ENCODE measurements at regions of chr11 and their contacts with region 1.

Region 1: DNA sequence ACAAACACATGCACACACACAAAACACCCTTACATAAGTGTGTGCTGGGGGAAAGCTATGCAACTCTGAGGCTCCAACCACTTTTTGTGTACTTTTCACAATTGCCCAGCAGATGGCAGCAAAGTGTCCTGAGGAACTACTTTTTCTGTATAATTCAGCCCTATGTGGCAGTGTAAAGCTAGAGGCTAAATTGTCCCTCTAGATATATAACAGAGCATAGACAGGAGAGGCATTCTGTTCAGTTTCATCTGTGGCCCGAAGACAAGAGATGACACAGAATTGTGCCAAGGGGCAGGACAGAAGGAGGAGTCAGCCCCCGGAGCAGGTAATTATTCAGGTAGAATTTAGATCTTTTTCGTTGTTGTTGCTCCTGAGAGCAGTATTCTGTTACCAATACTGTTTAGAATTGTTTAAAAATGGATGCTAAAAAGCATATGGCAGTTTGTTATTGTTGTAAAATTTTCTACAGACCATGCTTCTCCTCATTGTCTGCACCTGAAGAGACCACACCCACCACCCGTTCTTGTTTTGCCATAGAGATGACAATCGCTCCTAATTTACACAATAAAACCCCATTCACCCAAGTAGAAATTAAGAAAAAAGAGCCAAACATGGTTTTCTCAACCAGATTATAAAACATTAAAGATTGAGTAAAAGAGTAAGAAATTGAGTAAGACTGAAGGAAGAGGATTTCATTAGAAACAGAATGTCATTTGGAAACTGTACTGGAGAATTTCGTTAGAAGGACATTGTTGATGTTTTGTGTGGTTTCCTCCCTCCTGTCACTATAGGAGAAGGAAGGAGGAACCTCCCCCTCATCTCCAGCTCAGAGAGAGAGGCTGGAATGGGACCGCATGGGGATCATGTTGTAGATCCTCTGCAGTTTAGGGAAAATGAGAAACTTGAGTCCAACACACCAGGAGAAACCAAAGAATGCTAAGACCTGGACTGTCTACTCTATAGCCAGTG is 14.5 kb upstream of the MS4A7 start:
- DNase-seq: peak; percentile 88
- ATAC-seq: peak; percentile 92
- H3K4me3 ChIP-seq: peak overlapping the region; percentile 52; the same call in 1 of the 2 replicates
- H3K27ac ChIP-seq: peak overlapping the region; percentile 36
- H3K4me1 ChIP-seq: peaks cover 14% of the 10 kb centered on the region; the same call in 1 of the 2 replicates
- H3K27me3 ChIP-seq: no peaks in the 10 kb centered on the region
- CTCF ChIP-seq: peak; percentile 63 to 92 (median 78); a peak in 5 of 6 replicates
- EP300 ChIP-seq: no peak
- POLR2A ChIP-seq: no peak
- RAD21 ChIP-seq: peak; percentile 95

Region 2: DNA sequence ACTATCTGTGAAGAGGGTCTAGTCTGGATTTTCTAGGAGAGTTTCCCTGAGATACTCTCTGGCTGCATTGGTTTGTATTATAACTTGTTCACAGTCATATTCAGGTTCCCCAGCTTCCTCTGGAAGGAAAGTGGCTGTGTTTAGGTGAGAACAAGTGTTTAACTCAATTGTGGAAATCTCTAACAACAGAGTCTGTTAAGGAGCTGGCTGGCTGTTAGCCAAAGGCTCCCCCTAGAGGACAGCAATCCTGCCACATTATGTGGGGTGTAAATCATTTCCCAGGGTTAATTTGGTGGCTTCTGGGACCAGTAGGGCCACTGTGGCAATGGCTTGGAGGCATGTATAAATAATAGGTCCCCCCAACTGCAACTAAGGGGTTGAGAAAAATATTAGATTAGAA is 18.3 kb before region 1 on chr11:
- CTCF ChIA-PET with region 1: interaction called, 119 read pairs
- POLR2A ChIA-PET with region 1: no interaction called
- RAD21 ChIA-PET with region 1: interaction called, 20 read pairs
- SMC1A ChIA-PET with region 1: interaction called, 41 read pairs
- in situ Hi-C with region 1: no loop called
- intact Hi-C with region 1: no loop called
- DNase-seq: no peak
- ATAC-seq: peak; percentile 87
- H3K4me3 ChIP-seq: no peak overlapping the region
- H3K27ac ChIP-seq: no peak overlapping the region
- H3K4me1 ChIP-seq: peaks cover 11% of the 10 kb centered on the region
- H3K27me3 ChIP-seq: no peaks in the 10 kb centered on the region
- CTCF ChIP-seq: peak; percentile 63 to 68 (median 66)
- EP300 ChIP-seq: no peak
- POLR2A ChIP-seq: no peak
- RAD21 ChIP-seq: peak; percentile 64

Region 3: GRCh38 chr11:60455531-60456042 is 91.8 kb after region 1 on chr11 and contains the start of gene MS4A1:
- CTCF ChIA-PET with region 1: interaction called, 190 read pairs
- POLR2A ChIA-PET with region 1: interaction called, 23 read pairs
- RAD21 ChIA-PET with region 1: interaction called, 195 read pairs
- SMC1A ChIA-PET with region 1: interaction called, 298 read pairs
- in situ Hi-C with region 1: loop called (anchors 10 kb)
- intact Hi-C with region 1: loop called (anchors 1 kb)
- DNase-seq: peak; percentile 98
- ATAC-seq: peak; percentile 82
- H3K4me3 ChIP-seq: peak within 1 kb of the TSS; percentile 89
- H3K27ac ChIP-seq: peak within 1 kb of the TSS; percentile 93
- H3K4me1 ChIP-seq: peaks cover 21% of the 10 kb centered on the region
- H3K27me3 ChIP-seq: no peaks in the 10 kb centered on the region
- CTCF ChIP-seq: no peak
- EP300 ChIP-seq: peak; percentile 98 to 99
- POLR2A ChIP-seq: peak; percentile 90
- RAD21 ChIP-seq: 0 out of 2 replicates have a peak, but pooled peaks have one; percentile 14
- polyA plus RNA-seq, gene MS4A1: 730 to 1,013 TPM

Region 4: GRCh38 chr11:60485986-60486385 is 122.2 kb after region 1 on chr11:
- CTCF ChIA-PET with region 1: interaction called, 146 read pairs
- POLR2A ChIA-PET with region 1: interaction called, 4 read pairs
- RAD21 ChIA-PET with region 1: interaction called, 97 read pairs
- SMC1A ChIA-PET with region 1: interaction called, 123 read pairs
- in situ Hi-C with region 1: loop called (anchors 5 kb)
- intact Hi-C with region 1: loop called (anchors 1 kb)
- DNase-seq: peak; percentile 86
- ATAC-seq: peak; percentile 100
- H3K4me3 ChIP-seq: no peak overlapping the region
- H3K27ac ChIP-seq: no peak overlapping the region
- H3K4me1 ChIP-seq: peaks cover 9% of the 10 kb centered on the region
- H3K27me3 ChIP-seq: no peaks in the 10 kb centered on the region
- CTCF ChIP-seq: peak; percentile 91 to 100 (median 99); a peak in 5 of 6 replicates
- EP300 ChIP-seq: no peak
- POLR2A ChIP-seq: no peak
- RAD21 ChIP-seq: peak; percentile 93

Region 5: DNA sequence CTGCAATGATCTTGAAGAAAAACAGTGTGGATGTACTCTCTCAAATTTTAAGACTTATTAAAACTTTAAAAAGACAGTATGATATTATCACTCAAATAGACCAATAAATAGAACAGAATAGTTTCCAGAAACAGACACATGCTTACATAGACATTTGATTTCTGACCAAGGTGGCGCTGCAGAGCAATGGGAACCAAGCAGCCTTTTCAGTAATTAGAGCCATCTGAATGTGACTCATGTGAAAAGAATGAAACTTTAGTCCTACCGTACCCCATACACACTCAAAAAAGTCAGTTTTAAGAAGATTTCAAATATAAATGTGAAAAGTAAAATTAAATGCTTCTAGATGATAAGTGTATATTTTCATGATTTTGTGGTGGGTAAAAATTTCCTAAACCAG is 261.4 kb after region 1 on chr11:
- CTCF ChIA-PET with region 1: interaction called, 61 read pairs
- POLR2A ChIA-PET with region 1: no interaction called
- RAD21 ChIA-PET with region 1: interaction called, 41 read pairs
- SMC1A ChIA-PET with region 1: interaction called, 38 read pairs
- in situ Hi-C with region 1: no loop called
- intact Hi-C with region 1: loop called (anchors 5 kb)
- DNase-seq: no peak
- ATAC-seq: peak; percentile 61
- H3K4me3 ChIP-seq: no peak overlapping the region
- H3K27ac ChIP-seq: no peak overlapping the region
- H3K4me1 ChIP-seq: no peaks in the 10 kb centered on the region
- H3K27me3 ChIP-seq: no peaks in the 10 kb centered on the region
- CTCF ChIP-seq: peak; percentile 17 to 22 (median 20); a peak in 3 of 6 replicates
- EP300 ChIP-seq: no peak
- POLR2A ChIP-seq: no peak
- RAD21 ChIP-seq: no peak

Measured in GM12878 (cell line).